Endothelial cell of umbilical vein (primary cell): ENCODE measurements at regions of chr16 and their contacts with region 1.

Region 1: DNA sequence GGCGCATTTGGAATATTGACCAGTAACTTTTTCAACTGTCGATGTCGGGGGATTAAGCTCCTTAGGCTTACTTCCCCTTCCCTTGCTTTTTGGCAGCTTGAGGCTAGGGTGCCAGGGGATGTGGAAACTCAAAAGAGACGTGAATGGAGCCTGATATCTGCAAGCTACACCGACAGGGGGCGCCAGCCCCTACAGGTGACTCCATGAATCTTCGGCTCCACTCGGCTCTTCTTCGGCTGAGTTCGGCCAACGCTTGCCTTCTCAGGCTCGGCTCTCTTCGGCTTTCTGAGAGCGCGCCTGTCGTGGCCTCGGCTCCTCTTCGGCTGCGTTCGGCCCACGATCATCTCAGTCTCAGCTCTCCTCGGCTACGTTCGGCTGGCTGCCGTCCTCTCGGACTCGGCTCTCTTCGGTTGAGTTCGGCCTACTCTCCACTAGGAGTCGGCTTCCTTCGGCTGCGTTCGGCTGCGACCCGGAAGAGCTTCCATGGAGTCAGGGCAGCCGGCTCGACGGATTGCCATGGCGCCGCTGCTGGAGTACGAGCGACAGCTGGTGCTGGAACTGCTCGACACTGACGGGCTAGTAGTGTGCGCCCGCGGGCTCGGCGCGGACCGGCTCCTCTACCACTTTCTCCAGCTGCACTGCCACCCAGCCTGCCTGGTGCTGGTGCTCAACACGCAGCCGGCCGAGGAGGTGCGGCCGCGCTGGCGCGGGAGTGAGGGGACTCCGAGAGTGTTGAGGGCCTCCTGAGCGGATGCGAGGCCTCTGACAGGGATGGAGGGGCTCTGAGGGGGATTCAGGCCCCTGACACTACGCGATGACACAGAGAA is at the start of gene ERCC4:
- DNase-seq: peak; percentile 100
- H3K4me3 ChIP-seq: peak within 1 kb of the TSS; percentile 66 to 83 (median 67)
- H3K27ac ChIP-seq: peak within 1 kb of the TSS; percentile 37
- H3K4me1 ChIP-seq: peaks cover 10% of the 10 kb centered on the region
- H3K27me3 ChIP-seq: peaks cover 3% of the 10 kb centered on the region in 2 experiments
- CTCF ChIP-seq: peak; percentile 97
- POLR2A ChIP-seq: peak; percentile 83
- total RNA-seq, gene ERCC4: 15.1 and 17.1 TPM in 2 replicates

Region 2: GRCh38 chr16:13718748-13719147 is 201.1 kb before region 1 on chr16:
- CTCF ChIA-PET with region 1: no interaction called
- POLR2A ChIA-PET with region 1: no interaction called
- dilution Hi-C with region 1: no loop called
- intact Hi-C with region 1: no loop called
- DNase-seq: no peak
- H3K4me3 ChIP-seq: no peak overlapping the region
- H3K27ac ChIP-seq: no peak overlapping the region
- H3K4me1 ChIP-seq: no peaks in the 10 kb centered on the region
- H3K27me3 ChIP-seq: no peaks in the 10 kb centered on the region
- CTCF ChIP-seq: no peak
- POLR2A ChIP-seq: no peak

Region 3: DNA sequence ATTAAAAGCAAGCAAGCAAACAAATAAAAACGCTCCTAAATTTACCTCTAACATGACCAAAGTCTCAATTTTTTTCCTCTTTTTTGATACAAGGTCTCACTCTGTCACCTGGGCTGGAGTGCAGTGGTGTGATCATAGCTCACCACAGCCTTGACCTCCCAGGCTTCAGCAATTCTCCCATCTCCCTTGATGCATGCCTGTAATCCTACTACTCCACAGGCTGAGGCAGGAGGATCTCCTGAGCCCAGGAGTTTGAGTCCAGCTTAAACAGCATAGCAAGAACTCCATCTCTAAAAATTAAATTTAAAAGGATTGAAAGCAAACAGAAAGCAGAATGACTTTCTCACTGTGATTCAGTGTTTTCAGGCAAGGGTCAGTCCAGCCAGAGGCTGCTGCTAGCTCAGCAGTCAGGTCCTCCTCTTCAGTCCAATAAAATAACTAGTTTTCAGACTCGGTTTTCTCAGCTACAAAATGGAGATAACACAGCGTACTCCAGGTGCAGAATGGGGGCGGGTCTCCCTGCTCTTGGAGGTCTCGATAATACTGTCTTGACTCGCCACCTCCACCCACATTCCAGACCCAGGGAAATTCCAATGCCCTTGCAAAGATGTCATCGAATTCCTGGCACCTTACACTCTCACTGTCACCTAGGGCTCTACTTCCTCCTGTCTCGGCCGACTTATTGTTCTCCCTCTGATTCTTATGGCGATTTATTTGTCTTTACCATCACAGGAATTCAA is 130.6 kb after region 1 on chr16:
- CTCF ChIA-PET with region 1: interaction called, 11 read pairs
- POLR2A ChIA-PET with region 1: no interaction called
- dilution Hi-C with region 1: no loop called
- intact Hi-C with region 1: loop called (anchors 5 kb)
- DNase-seq: peak; percentile 62
- H3K4me3 ChIP-seq: peak overlapping the region in 1 of 3 experiments; percentile 28
- H3K27ac ChIP-seq: peak overlapping the region; percentile 84
- H3K4me1 ChIP-seq: peaks cover 17% of the 10 kb centered on the region
- H3K27me3 ChIP-seq: no peaks in the 10 kb centered on the region
- CTCF ChIP-seq: no peak
- POLR2A ChIP-seq: no peak

Region 4: GRCh38 chr16:14125000-14125681 is 205.2 kb after region 1 on chr16:
- CTCF ChIA-PET with region 1: interaction called, 15 read pairs
- POLR2A ChIA-PET with region 1: no interaction called
- dilution Hi-C with region 1: no loop called
- intact Hi-C with region 1: no loop called
- DNase-seq: no peak
- H3K4me3 ChIP-seq: no peak overlapping the region
- H3K27ac ChIP-seq: no peak overlapping the region
- H3K4me1 ChIP-seq: peaks cover 10% of the 10 kb centered on the region
- H3K27me3 ChIP-seq: no peaks in the 10 kb centered on the region
- CTCF ChIP-seq: no peak
- POLR2A ChIP-seq: no peak

Region 5: GRCh38 chr16:14215941-14216340 is 296.0 kb after region 1 on chr16:
- CTCF ChIA-PET with region 1: interaction called, 10 read pairs
- POLR2A ChIA-PET with region 1: no interaction called
- dilution Hi-C with region 1: no loop called
- intact Hi-C with region 1: no loop called
- DNase-seq: no peak
- H3K4me3 ChIP-seq: no peak overlapping the region
- H3K27ac ChIP-seq: no peak overlapping the region
- H3K4me1 ChIP-seq: no peaks in the 10 kb centered on the region
- H3K27me3 ChIP-seq: no peaks in the 10 kb centered on the region
- CTCF ChIP-seq: no peak
- POLR2A ChIP-seq: no peak

Region 6: GRCh38 chr16:14280541-14280940 is 360.6 kb after region 1 on chr16:
- CTCF ChIA-PET with region 1: interaction called, 49 read pairs
- POLR2A ChIA-PET with region 1: interaction called, 4 read pairs
- dilution Hi-C with region 1: no loop called
- intact Hi-C with region 1: loop called (anchors 1 kb)
- DNase-seq: no peak
- H3K4me3 ChIP-seq: no peak overlapping the region
- H3K27ac ChIP-seq: peak overlapping the region; percentile 7
- H3K4me1 ChIP-seq: peaks cover 5% of the 10 kb centered on the region
- H3K27me3 ChIP-seq: no peaks in the 10 kb centered on the region
- CTCF ChIP-seq: no peak
- POLR2A ChIP-seq: no peak

Region 7: GRCh38 chr16:14529010-14529669 is 609.2 kb after region 1 on chr16:
- CTCF ChIA-PET with region 1: interaction called, 21 read pairs
- POLR2A ChIA-PET with region 1: no interaction called
- dilution Hi-C with region 1: no loop called
- intact Hi-C with region 1: loop called (anchors 1 kb)
- DNase-seq: peak; percentile 89
- H3K4me3 ChIP-seq: no peak overlapping the region
- H3K27ac ChIP-seq: no peak overlapping the region
- H3K4me1 ChIP-seq: peaks cover 3% of the 10 kb centered on the region
- H3K27me3 ChIP-seq: no peaks in the 10 kb centered on the region
- CTCF ChIP-seq: peak; percentile 56 to 71
- POLR2A ChIP-seq: no peak